Left ventricle myocardium inferior (tissue), 1 donor: ENCODE measurements at regions of chr15 and their contacts with region 1.

Region 1: DNA sequence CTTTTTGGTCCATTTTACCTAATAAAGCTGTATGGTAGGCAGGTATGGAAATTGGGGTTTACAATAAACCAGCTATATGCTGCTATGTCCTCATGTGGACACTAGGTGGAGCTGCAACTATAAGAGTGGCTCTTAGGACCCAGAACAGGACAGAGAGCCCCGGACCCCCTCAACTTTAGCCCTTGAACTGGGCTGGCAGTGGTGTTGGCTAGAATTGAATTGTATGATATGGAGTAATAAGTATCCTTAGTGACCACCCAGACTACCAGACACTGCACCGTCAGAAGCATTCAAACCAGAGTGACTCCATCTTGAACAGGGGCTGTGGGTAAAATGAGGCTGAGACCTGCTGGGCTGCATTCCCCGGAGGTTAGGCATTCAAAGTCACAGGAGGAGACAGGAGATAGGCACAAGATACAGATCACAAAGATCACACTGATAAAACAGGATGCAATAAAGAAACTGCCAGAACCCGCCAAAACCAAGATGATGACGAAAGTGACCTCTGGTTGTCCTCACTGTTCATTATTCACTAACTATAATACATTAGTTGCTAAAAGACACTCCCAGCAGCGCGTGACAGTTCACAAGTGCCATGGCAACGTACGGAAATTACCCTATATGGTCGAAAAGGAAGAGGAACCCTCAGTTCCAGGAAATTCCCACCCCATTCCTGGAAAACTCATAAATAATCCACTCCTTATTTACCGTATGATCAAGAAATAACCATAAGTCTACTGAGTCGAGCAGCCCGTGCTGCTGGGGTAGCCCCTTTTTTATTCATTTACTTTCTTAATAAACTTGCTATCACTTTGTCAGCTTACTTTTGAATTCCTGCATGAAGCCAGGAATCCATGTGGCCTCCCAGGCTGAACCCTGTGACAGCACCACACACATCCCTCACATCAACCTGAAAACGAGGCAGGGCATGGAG is 68.7 kb upstream of the BLM start:
- DNase-seq: peak; percentile 47
- H3K4me3 ChIP-seq: peak overlapping the region; percentile 33
- H3K27ac ChIP-seq: peak overlapping the region; percentile 70
- H3K4me1 ChIP-seq: peaks cover 21% of the 10 kb centered on the region
- H3K27me3 ChIP-seq: no peaks in the 10 kb centered on the region
- CTCF ChIP-seq: peak; percentile 94

Region 2: GRCh38 chr15:90691982-90692773 is 43.8 kb after region 1 on chr15:
- intact Hi-C with region 1: loop called (anchors 5 kb)
- DNase-seq: no peak
- H3K4me3 ChIP-seq: no peak overlapping the region
- H3K27ac ChIP-seq: no peak overlapping the region
- H3K4me1 ChIP-seq: no peaks in the 10 kb centered on the region
- H3K27me3 ChIP-seq: no peaks in the 10 kb centered on the region
- CTCF ChIP-seq: no peak

Region 3: GRCh38 chr15:90886041-90886614 is 237.7 kb after region 1 on chr15:
- intact Hi-C with region 1: loop called (anchors 5 kb)
- DNase-seq: peak; percentile 83
- H3K4me3 ChIP-seq: peak overlapping the region; percentile 81
- H3K27ac ChIP-seq: peak overlapping the region; percentile 98
- H3K4me1 ChIP-seq: peaks cover 60% of the 10 kb centered on the region
- H3K27me3 ChIP-seq: no peaks in the 10 kb centered on the region
- CTCF ChIP-seq: peak; percentile 99